ENCODE measurements at regions of chr16 and their contacts with region 1.

Region 1: DNA sequence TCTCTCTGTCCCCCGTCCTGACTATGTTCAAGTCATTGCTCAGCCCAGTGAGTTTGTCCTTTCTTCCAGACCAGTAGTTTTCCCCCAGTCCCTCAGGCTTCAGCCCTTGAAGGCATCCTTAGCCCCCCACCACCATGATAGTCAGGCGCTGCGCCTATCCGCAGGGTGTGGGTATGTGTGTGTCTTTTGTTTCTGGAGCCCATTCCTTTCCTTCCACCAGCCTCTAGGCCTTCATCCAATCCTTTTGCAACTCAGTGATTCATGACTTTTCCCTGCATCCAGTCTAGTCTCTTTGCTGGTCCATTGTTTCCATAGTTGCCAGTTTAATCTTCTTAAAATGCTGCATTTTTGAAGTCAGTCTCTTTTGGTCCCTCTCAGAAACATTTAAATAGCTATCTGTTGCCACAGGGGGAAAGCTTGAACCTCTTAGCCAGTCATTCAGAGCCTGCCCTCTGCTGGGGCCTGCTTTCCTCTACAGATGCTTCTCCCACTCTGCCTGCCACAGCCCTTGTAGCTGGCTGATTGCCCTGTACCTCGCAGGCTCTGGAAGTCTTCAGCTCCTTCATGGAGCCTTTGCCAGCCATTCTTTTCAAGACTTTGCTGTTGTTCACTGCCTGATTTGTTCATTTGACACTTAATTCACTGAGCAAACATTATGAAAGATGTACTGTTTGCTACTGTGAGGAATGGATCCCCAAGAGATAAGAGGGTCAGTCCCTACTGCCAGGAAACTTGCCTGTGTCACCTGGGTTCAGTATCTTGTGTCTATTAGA is 55.9 kb upstream of the ADCY7 start:
- DNase-seq: peak; percentile 48
- ATAC-seq: peak; percentile 100
- H3K4me3 ChIP-seq: no peak overlapping the region
- H3K27ac ChIP-seq: peak overlapping the region; percentile 61
- H3K4me1 ChIP-seq: peaks cover 18% of the 10 kb centered on the region
- H3K27me3 ChIP-seq: no peaks in the 10 kb centered on the region
- CTCF ChIP-seq: peak; percentile 81 to 92 (median 83)
- EP300 ChIP-seq: no peak
- POLR2A ChIP-seq: no peak
- RAD21 ChIP-seq: peak; percentile 82

Region 2: GRCh38 chr16:50079397-50080140 is 130.9 kb before region 1 on chr16:
- CTCF ChIA-PET with region 1: interaction called, 422 read pairs
- POLR2A ChIA-PET with region 1: no interaction called
- RAD21 ChIA-PET with region 1: interaction called, 309 read pairs
- SMC1A ChIA-PET with region 1: interaction called, 17 read pairs
- in situ Hi-C with region 1: no loop called
- intact Hi-C with region 1: no loop called
- DNase-seq: no peak
- ATAC-seq: no peak
- H3K4me3 ChIP-seq: no peak overlapping the region
- H3K27ac ChIP-seq: no peak overlapping the region
- H3K4me1 ChIP-seq: no peaks in the 10 kb centered on the region
- H3K27me3 ChIP-seq: no peaks in the 10 kb centered on the region
- CTCF ChIP-seq: no peak
- EP300 ChIP-seq: no peak
- POLR2A ChIP-seq: no peak
- RAD21 ChIP-seq: no peak

Region 3: DNA sequence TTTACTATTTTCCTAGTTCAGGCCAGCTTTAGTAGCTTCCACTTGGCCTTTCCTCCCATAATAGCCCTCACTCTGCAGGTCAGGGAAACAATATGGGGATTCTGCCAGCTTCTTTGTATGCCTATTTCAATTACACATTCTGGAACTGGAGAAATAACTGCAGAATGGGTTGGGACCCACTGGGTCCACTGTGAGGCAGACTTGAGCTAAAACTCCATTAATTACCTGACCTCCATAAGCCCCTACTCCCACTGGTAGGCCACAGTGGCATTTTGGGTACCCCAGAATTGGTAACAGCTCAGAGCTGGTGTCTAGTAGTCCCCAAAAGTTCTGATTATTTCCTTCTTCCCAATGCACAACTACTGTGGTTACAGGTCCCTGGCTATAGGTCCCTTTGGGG is 74.1 kb before region 1 on chr16:
- CTCF ChIA-PET with region 1: interaction called, 105 read pairs
- POLR2A ChIA-PET with region 1: no interaction called
- RAD21 ChIA-PET with region 1: interaction called, 26 read pairs
- SMC1A ChIA-PET with region 1: interaction called, 47 read pairs
- in situ Hi-C with region 1: no loop called
- intact Hi-C with region 1: loop called (anchors 1 kb)
- DNase-seq: no peak
- ATAC-seq: peak; percentile 44; the same call in 1 of the 3 replicates
- H3K4me3 ChIP-seq: no peak overlapping the region
- H3K27ac ChIP-seq: no peak overlapping the region
- H3K4me1 ChIP-seq: no peaks in the 10 kb centered on the region
- H3K27me3 ChIP-seq: no peaks in the 10 kb centered on the region
- CTCF ChIP-seq: peak in 2 of 3 experiments; percentile 6 to 23; a peak in 1 of 6 replicates
- EP300 ChIP-seq: no peak
- POLR2A ChIP-seq: no peak
- RAD21 ChIP-seq: peak; percentile 40; the same call in 1 of the 2 replicates

Region 4: GRCh38 chr16:50160495-50161164 is 49.8 kb before region 1 on chr16:
- CTCF ChIA-PET with region 1: interaction called, 48 read pairs
- POLR2A ChIA-PET with region 1: no interaction called
- RAD21 ChIA-PET with region 1: interaction called, 22 read pairs
- SMC1A ChIA-PET with region 1: interaction called, 44 read pairs
- in situ Hi-C with region 1: no loop called
- intact Hi-C with region 1: loop called (anchors 2 kb)
- DNase-seq: no peak
- ATAC-seq: peak; percentile 59
- H3K4me3 ChIP-seq: peak overlapping the region; percentile 9; the same call in 1 of the 2 replicates
- H3K27ac ChIP-seq: no peak overlapping the region
- H3K4me1 ChIP-seq: peaks cover 8% of the 10 kb centered on the region; the same call in 1 of the 2 replicates
- H3K27me3 ChIP-seq: no peaks in the 10 kb centered on the region
- CTCF ChIP-seq: no peak
- EP300 ChIP-seq: 0 out of 4 replicates have a peak, but pooled peaks of 1 of the 2 experiments have one; percentile 38
- POLR2A ChIP-seq: no peak
- RAD21 ChIP-seq: no peak

Region 5: DNA sequence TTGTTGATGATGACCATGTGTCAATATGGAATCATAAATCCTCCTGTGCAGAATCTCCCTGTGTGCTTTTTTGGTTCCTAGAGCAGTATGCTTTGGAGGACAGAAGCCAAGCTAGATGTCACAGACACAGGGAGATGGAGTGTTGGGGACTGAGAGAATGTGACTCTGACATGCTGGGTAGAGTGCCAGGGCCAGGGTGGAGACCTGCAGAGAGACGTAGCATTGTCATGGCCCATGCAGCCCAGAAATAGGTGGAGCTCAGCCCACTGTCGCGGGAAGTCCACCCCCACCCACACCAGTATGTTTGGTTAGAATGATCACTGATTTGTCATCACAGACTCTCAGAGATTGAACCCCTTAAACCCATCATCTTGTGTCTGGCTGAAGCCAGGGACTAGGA is 16.7 kb after region 1 on chr16:
- CTCF ChIA-PET with region 1: interaction called, 12 read pairs
- POLR2A ChIA-PET with region 1: no interaction called
- RAD21 ChIA-PET with region 1: no interaction called
- SMC1A ChIA-PET with region 1: interaction called, 6 read pairs
- in situ Hi-C with region 1: no loop called
- intact Hi-C with region 1: no loop called
- DNase-seq: no peak
- ATAC-seq: no peak
- H3K4me3 ChIP-seq: no peak overlapping the region
- H3K27ac ChIP-seq: no peak overlapping the region
- H3K4me1 ChIP-seq: no peaks in the 10 kb centered on the region
- H3K27me3 ChIP-seq: no peaks in the 10 kb centered on the region
- CTCF ChIP-seq: no peak
- EP300 ChIP-seq: no peak
- POLR2A ChIP-seq: no peak
- RAD21 ChIP-seq: no peak

Region 6: DNA sequence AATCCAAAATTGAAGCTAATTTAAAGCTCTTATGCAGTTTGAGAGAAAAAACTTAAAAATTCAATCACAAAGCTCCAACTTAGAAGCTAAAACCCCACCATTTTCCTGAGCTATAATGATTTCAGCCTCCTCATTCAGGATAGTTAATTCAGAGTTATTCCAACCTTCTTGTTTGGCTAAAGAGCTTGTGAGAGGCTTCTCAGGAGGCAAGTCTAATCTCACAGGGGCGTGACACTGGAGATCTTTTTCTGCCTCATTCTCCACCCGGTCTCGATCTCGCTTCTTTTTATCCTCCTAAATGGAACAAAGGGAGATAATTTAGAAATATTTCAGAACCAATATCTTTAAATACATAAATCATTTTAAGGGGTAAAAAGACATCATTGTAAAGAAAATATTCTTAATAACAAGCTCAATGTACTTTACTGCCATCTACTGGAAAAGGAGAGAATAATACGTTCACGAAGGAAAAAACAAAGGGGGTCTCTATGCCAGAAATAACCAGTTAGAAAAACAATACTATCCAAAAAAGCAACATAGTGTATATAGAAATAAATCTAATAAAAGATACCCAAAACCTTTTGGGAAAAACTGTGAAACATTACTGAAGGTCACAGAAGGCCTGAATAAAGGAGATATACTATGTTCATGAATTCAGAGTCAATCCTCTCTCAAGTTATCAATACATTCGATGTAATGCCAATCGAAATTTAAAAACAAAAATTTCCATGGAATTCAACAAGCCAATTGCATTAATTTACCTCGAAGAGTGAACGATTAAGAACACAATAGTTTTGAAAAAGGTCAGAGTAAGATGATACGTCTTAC is 144.4 kb after region 1 on chr16:
- CTCF ChIA-PET with region 1: interaction called, 236 read pairs
- POLR2A ChIA-PET with region 1: no interaction called
- RAD21 ChIA-PET with region 1: interaction called, 28 read pairs
- SMC1A ChIA-PET with region 1: interaction called, 82 read pairs
- in situ Hi-C with region 1: loop called (anchors 5 kb)
- intact Hi-C with region 1: loop called (anchors 1 kb)
- DNase-seq: no peak
- ATAC-seq: no peak
- H3K4me3 ChIP-seq: no peak overlapping the region
- H3K27ac ChIP-seq: no peak overlapping the region
- H3K4me1 ChIP-seq: no peaks in the 10 kb centered on the region
- H3K27me3 ChIP-seq: no peaks in the 10 kb centered on the region
- CTCF ChIP-seq: peak; percentile 31 to 52 (median 50); a peak in 4 of 6 replicates
- EP300 ChIP-seq: no peak
- POLR2A ChIP-seq: no peak
- RAD21 ChIP-seq: no peak